ENCODE measurements at regions of chr9 and their contacts with region 1.

Region 1: DNA sequence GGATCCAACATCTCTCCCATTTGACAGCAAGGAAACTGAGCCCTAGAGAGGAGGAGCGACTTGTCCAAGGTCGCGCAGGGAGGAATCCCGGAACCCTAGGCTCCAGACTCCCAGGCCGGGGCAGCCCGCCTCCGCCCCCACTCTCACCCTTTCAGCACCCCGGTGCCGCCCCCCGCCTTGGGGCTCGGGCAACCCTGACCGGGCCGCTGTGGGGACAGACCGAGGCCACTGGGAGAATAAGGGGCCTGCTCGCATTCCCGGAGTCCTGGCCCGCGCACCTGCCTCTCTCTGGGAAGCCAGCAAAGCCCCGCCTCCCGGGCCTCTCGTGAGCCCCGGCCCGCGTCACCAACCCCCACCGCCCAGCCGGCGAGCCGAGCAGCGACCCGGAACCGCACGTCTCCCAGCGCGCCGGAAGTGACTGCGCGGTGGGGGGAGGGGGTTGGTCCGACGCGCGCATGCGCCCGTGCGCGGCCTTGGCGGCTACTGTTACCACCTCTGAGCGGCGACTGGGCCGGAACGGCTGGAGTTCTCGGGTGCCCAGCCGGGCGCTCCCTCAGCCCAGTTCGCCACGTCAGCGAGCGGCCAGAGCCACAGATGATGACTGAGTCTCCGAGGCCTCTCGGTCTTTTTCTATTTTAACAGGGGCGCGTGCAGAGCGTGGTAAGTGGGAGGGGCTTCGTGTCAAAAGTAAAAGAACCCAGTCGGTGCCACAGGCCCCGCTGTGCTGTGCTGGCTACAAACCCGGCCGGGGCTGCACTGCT is at the start of gene GOLGA1:
- DNase-seq: peak; percentile 95 to 96
- ATAC-seq: peak; percentile 98 to 99 (median 99)
- H3K4me3 ChIP-seq: peak within 1 kb of the TSS; percentile 68 to 94 (median 86)
- H3K27ac ChIP-seq: peak within 1 kb of the TSS; percentile 79 to 99 (median 96)
- H3K4me1 ChIP-seq: peaks cover 0 to 26% (median 14%) of the 10 kb centered on the region in 9 donors
- H3K27me3 ChIP-seq: no peaks in the 10 kb centered on the region
- CTCF ChIP-seq: peak in 1 of 9 donors; percentile 13
- total RNA-seq, gene GOLGA1: 15.6 to 26.0 (median 19.2) TPM

Region 2: DNA sequence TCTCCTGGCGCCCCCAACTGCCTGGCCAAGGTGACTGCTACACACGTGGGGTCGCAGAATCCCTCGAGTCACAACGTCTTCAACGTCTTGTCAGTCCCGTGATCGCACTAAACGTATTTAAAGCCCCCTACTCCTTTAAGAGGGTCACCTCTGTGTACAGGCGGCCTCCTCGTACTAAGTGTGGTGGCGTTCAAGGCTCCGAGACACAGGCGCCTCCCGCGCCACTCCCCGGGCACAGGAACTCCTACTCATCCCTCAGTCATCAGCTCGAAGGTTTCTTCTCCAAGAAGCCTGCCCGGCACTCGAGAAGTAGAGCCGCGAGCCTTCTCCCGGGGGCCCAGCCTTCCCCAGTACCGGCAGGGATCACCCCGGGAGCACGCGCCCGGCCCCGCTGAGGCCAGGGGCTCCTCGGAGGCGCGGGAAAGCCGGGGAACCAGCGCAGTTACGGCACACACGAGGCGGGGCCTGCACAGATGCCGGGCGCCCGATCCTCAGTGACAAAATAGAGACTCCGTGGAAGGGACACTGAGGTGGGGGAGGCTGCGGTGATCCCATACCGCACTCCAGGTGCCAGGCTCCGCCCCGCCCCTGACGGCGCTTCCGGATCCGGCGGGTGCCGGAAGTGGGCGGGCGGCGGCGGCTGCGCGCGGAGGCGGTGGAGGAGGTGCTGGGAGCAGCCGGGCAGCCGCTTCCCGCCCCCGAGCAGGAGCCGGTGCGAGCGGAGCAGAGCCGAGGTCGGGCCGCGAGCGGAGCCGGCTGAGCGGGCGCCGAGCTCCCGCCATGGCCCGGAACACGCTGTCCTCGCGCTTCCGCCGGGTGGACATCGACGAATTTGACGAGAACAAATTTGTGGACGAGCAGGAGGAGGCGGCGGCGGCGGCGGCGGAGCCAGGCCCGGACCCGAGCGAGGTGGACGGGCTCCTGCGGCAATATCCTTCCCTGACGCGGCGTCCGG is 72.1 kb before region 1 on chr9:
- intact Hi-C with region 1: loop called in 3 of 10 experiments (anchors 5 to 10 kb)
- DNase-seq: peak; percentile 85 to 91
- ATAC-seq: peak; percentile 87 to 94 (median 92)
- H3K4me3 ChIP-seq: peak overlapping the region; percentile 83 to 99 (median 92)
- H3K27ac ChIP-seq: peak overlapping the region; percentile 79 to 98 (median 96)
- H3K4me1 ChIP-seq: peaks cover 28 to 59% (median 50%) of the 10 kb centered on the region in 9 donors
- H3K27me3 ChIP-seq: no peaks in the 10 kb centered on the region
- CTCF ChIP-seq: peak in 2 of 9 donors; percentile 14 to 26

Region 3: GRCh38 chr9:125143375-125144090 is 202.7 kb after region 1 on chr9 and contains the start of gene SCAI:
- intact Hi-C with region 1: loop called in 8 of 10 experiments (anchors 1 to 10 kb)
- DNase-seq: peak; percentile 99
- ATAC-seq: peak; percentile 100
- H3K4me3 ChIP-seq: peak within 1 kb of the TSS; percentile 57 to 78 (median 70)
- H3K27ac ChIP-seq: peak within 1 kb of the TSS in 8 of 10 donors; percentile 58 to 79 (median 67)
- H3K4me1 ChIP-seq: peaks cover 2 to 17% (median 11%) of the 10 kb centered on the region in 9 donors
- H3K27me3 ChIP-seq: no peaks in the 10 kb centered on the region
- CTCF ChIP-seq: peak; percentile 96 to 100 (median 99)
- total RNA-seq, gene SCAI: 2.5 to 4.4 (median 3.6) TPM

Region 4: GRCh38 chr9:125189361-125190289 is 248.8 kb after region 1 on chr9 and contains the start of gene PPP6C:
- intact Hi-C with region 1: loop called in 2 of 10 experiments (anchors 5 kb)
- DNase-seq: peak; percentile 98
- ATAC-seq: peak; percentile 99
- H3K4me3 ChIP-seq: peak within 1 kb of the TSS; percentile 73 to 100 (median 90)
- H3K27ac ChIP-seq: peak within 1 kb of the TSS; percentile 52 to 99 (median 95)
- H3K4me1 ChIP-seq: peaks cover 4 to 53% (median 41%) of the 10 kb centered on the region in 9 donors
- H3K27me3 ChIP-seq: no peaks in the 10 kb centered on the region
- CTCF ChIP-seq: peak; percentile 21 to 85 (median 69)
- total RNA-seq, gene PPP6C: 32.3 to 41.5 (median 38.5) TPM

Measured in heart right ventricle (tissue), 16 donors.